WTC11 (cell line): ENCODE measurements at regions of chr1 and their contacts with region 1.

Region 1: DNA sequence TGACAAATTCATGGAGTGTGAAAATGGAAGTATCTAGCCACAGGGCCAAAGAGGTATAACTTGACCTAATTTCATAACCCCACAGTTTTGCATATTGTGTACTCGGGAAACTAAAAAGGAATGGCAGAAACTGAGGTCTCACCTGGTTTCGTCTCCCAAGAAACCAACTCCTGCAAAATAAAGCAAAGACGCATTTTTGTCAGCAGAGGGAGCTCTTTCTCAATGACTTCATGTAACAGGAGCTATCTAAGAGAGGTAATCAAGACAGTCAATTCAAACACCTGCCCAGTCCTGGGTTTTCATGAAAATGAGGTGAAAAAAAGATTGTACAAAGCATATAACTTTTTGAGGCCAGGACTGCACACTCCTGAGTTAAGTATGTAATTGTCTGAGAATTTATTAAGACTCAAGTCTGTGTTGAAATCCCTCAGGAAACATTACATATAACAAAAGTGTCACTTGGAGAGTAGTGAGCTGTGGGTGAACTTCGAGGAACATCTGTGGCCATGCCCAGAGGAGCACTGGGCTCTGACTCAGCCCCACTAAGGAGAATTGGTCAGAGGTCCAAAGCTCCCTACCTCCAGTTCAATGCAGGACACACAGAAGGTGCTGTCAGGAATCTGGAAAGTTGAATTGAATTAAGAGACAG is 17.6 kb downstream of the FCRL4 start:
- DNase-seq: peak; percentile 36
- ATAC-seq: peak; percentile 87
- H3K4me3 Mint-ChIP-seq: no peak overlapping the region
- H3K27ac Mint-ChIP-seq: peak overlapping the region; percentile 85; the same call in 1 of the 2 replicates
- H3K4me1 Mint-ChIP-seq: peaks cover 4% of the 10 kb centered on the region
- H3K27me3 Mint-ChIP-seq: no peaks in the 10 kb centered on the region
- CTCF ChIP-seq: peak; percentile 65

Region 2: GRCh38 chr1:157156058-157156541 is 424.2 kb before region 1 on chr1:
- CTCF ChIA-PET with region 1: no interaction called
- POLR2A ChIA-PET with region 1: no interaction called
- DNase-seq: peak; percentile 93
- ATAC-seq: peak; percentile 83
- H3K4me3 Mint-ChIP-seq: peak overlapping the region; percentile 54
- H3K27ac Mint-ChIP-seq: no peak overlapping the region
- H3K4me1 Mint-ChIP-seq: peaks cover 57% of the 10 kb centered on the region
- H3K27me3 Mint-ChIP-seq: no peaks in the 10 kb centered on the region; the same call in 1 of the 2 replicates
- CTCF ChIP-seq: peak; percentile 99

Region 3: GRCh38 chr1:157562515-157562914 is 17.8 kb before region 1 on chr1:
- CTCF ChIA-PET with region 1: interaction called, 19 read pairs
- POLR2A ChIA-PET with region 1: no interaction called
- DNase-seq: no peak
- ATAC-seq: peak; percentile 41
- H3K4me3 Mint-ChIP-seq: no peak overlapping the region
- H3K27ac Mint-ChIP-seq: peak overlapping the region; percentile 6
- H3K4me1 Mint-ChIP-seq: peaks cover 59% of the 10 kb centered on the region
- H3K27me3 Mint-ChIP-seq: no peaks in the 10 kb centered on the region; the same call in 1 of the 2 replicates
- CTCF ChIP-seq: no peak

Region 4: GRCh38 chr1:157626099-157626498 is 45.8 kb after region 1 on chr1:
- CTCF ChIA-PET with region 1: interaction called, 10 read pairs
- POLR2A ChIA-PET with region 1: no interaction called
- DNase-seq: peak; percentile 70
- ATAC-seq: peak; percentile 99
- H3K4me3 Mint-ChIP-seq: no peak overlapping the region
- H3K27ac Mint-ChIP-seq: no peak overlapping the region
- H3K4me1 Mint-ChIP-seq: peaks cover 7% of the 10 kb centered on the region; the same call in 1 of the 2 replicates
- H3K27me3 Mint-ChIP-seq: no peaks in the 10 kb centered on the region; the same call in 1 of the 2 replicates
- CTCF ChIP-seq: peak; percentile 70

Region 5: DNA sequence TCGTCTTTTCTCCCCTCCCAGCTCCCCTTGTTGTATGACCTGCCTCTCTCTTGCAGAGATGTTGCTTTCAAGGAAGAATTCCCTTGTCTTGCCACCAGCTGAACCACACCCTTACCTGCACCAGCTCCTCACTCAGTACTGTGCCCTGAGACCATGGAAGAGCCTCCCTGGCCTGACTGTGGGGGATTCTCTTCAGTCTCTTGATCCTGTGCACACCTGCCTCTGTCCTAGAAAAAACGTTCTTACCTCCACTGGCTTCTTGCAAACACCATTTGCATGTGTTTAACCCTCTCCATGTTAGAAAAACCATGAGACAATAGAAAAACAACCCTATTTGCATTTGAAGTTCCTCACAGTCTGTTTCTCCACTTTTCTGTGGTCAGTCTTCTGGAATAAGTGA is 60.9 kb after region 1 on chr1:
- CTCF ChIA-PET with region 1: interaction called, 12 read pairs
- POLR2A ChIA-PET with region 1: no interaction called
- DNase-seq: no peak
- ATAC-seq: peak; percentile 78
- H3K4me3 Mint-ChIP-seq: no peak overlapping the region
- H3K27ac Mint-ChIP-seq: no peak overlapping the region
- H3K4me1 Mint-ChIP-seq: no peaks in the 10 kb centered on the region
- H3K27me3 Mint-ChIP-seq: no peaks in the 10 kb centered on the region
- CTCF ChIP-seq: no peak

Region 6: DNA sequence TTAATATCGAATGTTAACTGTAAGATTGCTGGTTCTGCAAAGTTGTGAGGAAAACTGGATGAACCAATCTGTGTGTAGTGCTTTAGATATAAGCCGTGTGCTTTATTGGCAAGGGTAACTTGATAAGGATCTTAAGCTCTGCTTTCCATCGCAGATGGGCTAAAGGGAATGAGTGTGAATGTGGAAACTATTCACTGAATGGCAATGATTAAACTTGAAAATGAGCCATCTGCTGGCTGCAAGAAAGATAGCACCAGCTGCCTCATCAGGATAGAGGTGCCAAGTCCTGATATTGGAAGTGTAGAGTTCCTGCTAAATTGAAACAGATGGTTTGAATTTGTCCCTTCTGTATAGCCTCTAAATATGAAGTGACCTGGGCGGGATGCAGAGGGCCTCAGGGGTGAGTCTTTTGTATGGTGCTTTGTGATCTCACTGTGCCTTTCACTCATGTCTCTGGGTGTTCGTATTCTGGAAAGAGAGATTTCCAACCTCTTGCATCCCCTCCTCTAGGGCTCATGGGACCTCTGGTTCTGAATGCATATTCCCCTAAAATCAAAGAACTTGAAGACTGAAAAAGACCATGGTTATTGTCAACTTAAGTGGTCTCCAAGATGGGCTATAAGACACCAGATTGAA is 111.1 kb after region 1 on chr1:
- CTCF ChIA-PET with region 1: interaction called, 39 read pairs
- POLR2A ChIA-PET with region 1: no interaction called
- DNase-seq: no peak
- ATAC-seq: peak; percentile 97
- H3K4me3 Mint-ChIP-seq: no peak overlapping the region
- H3K27ac Mint-ChIP-seq: no peak overlapping the region
- H3K4me1 Mint-ChIP-seq: 0 out of 2 replicates have a peak, but pooled peaks cover 4% of the 10 kb centered on the region
- H3K27me3 Mint-ChIP-seq: peaks cover 3% of the 10 kb centered on the region
- CTCF ChIP-seq: no peak

Region 7: DNA sequence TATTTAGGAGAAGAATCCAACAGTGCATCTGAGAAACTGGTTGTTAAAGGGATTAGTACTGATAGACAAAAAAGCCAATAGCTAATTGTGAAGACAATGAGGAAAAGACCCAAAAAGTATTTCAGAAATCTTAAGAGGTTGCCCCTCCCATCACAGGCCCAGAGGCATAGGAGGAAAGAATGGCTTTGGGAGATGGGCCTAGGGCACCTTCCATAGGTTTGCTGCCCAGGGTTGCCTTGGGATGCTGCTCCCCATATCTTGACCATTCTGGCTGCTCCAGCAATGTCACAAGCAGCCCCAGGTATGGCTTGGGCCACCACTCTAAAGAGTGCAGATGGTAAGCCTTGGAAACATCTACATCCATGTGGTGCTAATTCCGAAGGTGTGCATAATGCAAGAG is 330.0 kb after region 1 on chr1:
- CTCF ChIA-PET with region 1: no interaction called
- POLR2A ChIA-PET with region 1: no interaction called
- DNase-seq: no peak
- ATAC-seq: no peak
- H3K4me3 Mint-ChIP-seq: no peak overlapping the region
- H3K27ac Mint-ChIP-seq: no peak overlapping the region
- H3K4me1 Mint-ChIP-seq: no peaks in the 10 kb centered on the region
- H3K27me3 Mint-ChIP-seq: peaks cover 19% of the 10 kb centered on the region
- CTCF ChIP-seq: no peak